PC-3 (cell line): ENCODE measurements at regions of chr12 and their contacts with region 1.

Region 1: DNA sequence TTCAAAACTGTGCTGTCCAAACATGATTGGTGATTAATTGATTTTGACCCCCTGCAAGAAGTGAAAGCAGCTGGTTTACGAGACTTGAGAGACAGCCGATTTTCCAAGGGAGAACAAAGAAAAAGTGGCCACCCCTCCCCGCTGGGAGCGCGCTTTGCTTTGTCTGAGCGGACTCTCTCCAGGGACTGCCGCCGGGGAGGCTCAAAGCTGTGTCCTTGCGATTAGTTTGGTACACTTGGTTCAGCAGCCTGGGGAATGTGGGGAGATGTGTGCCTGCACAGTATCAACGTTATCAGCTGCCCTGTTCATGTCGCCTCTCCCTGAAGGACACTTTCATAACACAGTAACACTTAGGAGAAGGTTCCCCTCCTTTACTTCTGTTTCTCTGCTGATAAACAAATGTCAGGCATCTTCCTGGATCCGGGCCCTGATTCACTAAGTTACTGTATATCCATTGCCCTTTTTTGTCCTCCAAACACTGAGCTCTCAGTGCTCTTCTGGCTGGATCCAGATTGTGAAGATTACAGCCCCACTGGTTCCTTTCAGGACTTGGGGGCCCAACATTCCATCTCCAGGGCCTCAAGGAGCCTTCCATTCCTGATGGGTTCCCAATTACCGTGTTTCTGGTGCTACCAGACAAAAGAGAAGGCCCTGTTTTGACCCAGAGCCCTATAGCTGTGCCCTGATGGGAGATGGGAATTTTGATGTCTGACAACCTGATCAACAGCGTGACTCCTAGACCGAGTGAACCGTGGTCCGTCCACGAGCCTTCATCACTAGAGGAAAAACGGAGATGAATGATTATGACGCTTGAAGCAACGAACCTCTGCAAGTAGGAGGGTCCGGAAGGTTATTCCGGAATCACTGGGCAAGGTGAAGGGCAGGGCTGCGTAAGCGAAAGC is 31.7 kb upstream of the TUBA1C start:
- DNase-seq: no peak
- ATAC-seq: no peak
- H3K4me3 ChIP-seq: no peak overlapping the region
- H3K27ac ChIP-seq: no peak overlapping the region
- H3K4me1 ChIP-seq: peaks cover 4% of the 10 kb centered on the region; the same call in 1 of the 2 replicates
- H3K27me3 ChIP-seq: no peaks in the 10 kb centered on the region
- CTCF ChIP-seq: no peak

Region 2: GRCh38 chr12:49088190-49088931 is 144.8 kb before region 1 on chr12:
- CTCF ChIA-PET with region 1: interaction called, 12 read pairs
- POLR2A ChIA-PET with region 1: no interaction called
- intact Hi-C with region 1: loop called (anchors 1 kb)
- DNase-seq: peak; percentile 95
- ATAC-seq: peak; percentile 80
- H3K4me3 ChIP-seq: peak overlapping the region; percentile 59
- H3K27ac ChIP-seq: no peak overlapping the region
- H3K4me1 ChIP-seq: peaks cover 24% of the 10 kb centered on the region
- H3K27me3 ChIP-seq: peaks cover 26% of the 10 kb centered on the region
- CTCF ChIP-seq: peak; percentile 94

Region 3: DNA sequence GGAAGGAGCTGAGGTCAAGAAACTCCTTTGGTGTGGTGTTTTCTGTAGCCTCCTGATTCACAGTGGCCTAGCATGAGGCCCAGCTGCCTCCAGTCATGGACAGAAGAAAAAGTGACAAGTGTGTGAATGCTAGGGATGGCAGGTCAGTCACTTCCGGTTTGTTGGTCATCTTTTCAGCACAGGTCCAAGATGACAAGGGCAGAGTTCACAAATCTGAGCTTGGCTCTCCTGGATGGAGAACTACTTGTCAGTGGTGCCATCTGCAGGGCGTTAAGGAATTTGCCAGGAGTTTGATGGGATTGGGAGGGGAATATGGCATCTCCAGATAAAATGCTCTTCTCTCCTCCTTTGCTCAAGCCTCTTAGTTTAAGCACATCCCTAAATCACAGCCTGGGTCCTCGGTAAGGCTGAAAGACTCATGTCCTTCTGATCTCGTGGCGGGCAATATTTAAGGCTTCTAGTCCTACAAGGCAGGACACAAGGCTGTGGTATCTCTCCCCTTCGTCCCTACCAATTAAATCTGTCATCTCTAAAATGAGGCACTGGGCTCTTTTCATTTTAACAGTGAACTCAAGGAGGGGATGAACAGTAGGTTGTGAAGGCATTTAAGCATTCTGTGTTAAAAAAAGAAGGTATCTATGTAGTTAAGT is 112.0 kb before region 1 on chr12:
- CTCF ChIA-PET with region 1: no interaction called
- POLR2A ChIA-PET with region 1: interaction called, 13 read pairs
- intact Hi-C with region 1: no loop called
- DNase-seq: peak; percentile 79
- ATAC-seq: peak; percentile 90
- H3K4me3 ChIP-seq: no peak overlapping the region
- H3K27ac ChIP-seq: no peak overlapping the region
- H3K4me1 ChIP-seq: 0 out of 2 replicates have a peak, but pooled peaks cover 2% of the 10 kb centered on the region
- H3K27me3 ChIP-seq: no peaks in the 10 kb centered on the region
- CTCF ChIP-seq: peak; percentile 84

Region 4: DNA sequence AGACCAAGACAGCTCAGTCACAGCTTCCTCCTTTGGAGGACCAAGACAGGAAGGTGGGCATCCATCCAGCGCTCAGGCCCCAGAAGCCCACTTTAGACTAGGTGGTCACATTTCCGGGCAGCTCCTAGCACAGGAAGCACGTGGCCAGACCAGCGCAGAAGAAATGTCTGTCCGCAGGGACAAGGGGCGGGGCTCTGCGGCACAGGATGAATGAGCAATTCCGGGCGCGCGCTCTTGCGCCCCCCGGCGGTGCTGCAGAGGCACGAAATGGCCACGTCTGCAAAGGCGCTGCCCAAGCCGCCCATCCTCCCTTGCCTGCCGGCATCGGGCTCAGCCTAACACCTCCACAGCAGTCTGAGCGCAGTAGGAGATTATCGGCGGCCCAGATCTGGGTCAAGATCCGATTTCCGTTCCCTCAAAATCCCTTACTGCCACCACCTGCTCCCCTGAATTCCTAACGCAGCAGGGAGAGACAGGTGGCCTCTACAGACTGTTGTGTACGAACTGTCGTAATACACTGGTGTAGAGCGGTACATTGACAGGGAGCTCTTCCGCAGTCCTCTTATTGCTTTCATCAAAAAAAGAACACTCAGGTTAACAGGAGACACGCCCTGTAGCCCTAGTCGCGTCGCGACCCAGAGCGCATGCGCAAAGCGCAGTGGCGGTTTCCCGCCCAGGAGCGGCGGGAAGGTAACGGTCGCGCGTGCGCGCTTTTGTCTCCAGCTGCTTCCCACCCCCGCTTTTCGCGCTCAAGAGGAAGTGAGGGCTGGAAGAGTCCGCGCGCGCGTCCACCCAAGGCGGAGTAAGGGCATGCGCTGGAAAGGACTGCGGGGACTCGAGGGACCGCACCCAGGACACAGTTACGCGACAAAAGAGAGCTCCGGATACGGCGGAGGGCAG is 102.8 kb before region 1 on chr12:
- CTCF ChIA-PET with region 1: interaction called, 3 read pairs
- POLR2A ChIA-PET with region 1: no interaction called
- intact Hi-C with region 1: loop called (anchors 2 kb)
- DNase-seq: peak; percentile 94
- ATAC-seq: peak; percentile 60
- H3K4me3 ChIP-seq: peak overlapping the region; percentile 84
- H3K27ac ChIP-seq: peak overlapping the region; percentile 87
- H3K4me1 ChIP-seq: peaks cover 31% of the 10 kb centered on the region
- H3K27me3 ChIP-seq: no peaks in the 10 kb centered on the region
- CTCF ChIP-seq: peak; percentile 86

Region 5: GRCh38 chr12:49188914-49189367 is 44.2 kb before region 1 on chr12 and contains the start of gene TUBA1A:
- CTCF ChIA-PET with region 1: no interaction called
- POLR2A ChIA-PET with region 1: no interaction called
- intact Hi-C with region 1: loop called (anchors 1 kb)
- DNase-seq: peak; percentile 72
- ATAC-seq: peak; percentile 92
- H3K4me3 ChIP-seq: peak within 1 kb of the TSS; percentile 89
- H3K27ac ChIP-seq: peak within 1 kb of the TSS; percentile 14; the same call in 1 of the 2 replicates
- H3K4me1 ChIP-seq: peaks cover 5% of the 10 kb centered on the region; the same call in 1 of the 2 replicates
- H3K27me3 ChIP-seq: no peaks in the 10 kb centered on the region; the same call in 1 of the 2 replicates
- CTCF ChIP-seq: no peak
- total RNA-seq, gene TUBA1A: 46.1 and 46.9 TPM in 2 replicates

Region 6: DNA sequence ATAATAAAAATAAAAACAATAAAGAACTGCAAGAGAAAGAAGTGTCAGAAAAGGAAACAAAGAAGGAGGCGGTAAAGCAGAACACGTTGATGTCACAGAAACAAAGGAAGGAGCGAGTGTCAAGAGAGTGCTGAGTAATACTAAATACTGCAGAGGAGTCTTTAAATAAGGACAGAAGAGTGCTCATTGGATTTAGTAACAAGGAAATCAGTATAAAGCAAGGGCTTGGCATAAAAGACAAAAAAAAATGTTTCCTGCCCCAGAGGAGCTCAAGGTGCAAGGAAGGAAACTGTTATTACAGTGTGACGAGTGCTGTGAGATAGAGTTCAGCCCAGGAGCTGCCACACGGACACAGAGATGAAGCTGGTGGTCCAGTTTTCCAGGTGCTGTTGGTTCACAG is 35.9 kb before region 1 on chr12:
- CTCF ChIA-PET with region 1: interaction called, 12 read pairs
- POLR2A ChIA-PET with region 1: no interaction called
- intact Hi-C with region 1: no loop called
- DNase-seq: no peak
- ATAC-seq: no peak
- H3K4me3 ChIP-seq: no peak overlapping the region
- H3K27ac ChIP-seq: no peak overlapping the region
- H3K4me1 ChIP-seq: peaks cover 26% of the 10 kb centered on the region
- H3K27me3 ChIP-seq: no peaks in the 10 kb centered on the region
- CTCF ChIP-seq: no peak

Region 7: GRCh38 chr12:49264738-49265515 is 31.7 kb after region 1 on chr12 and contains the start of gene TUBA1C:
- CTCF ChIA-PET with region 1: interaction called, 10 read pairs
- POLR2A ChIA-PET with region 1: no interaction called
- intact Hi-C with region 1: no loop called
- DNase-seq: peak; percentile 98
- ATAC-seq: peak; percentile 68
- H3K4me3 ChIP-seq: peak within 1 kb of the TSS; percentile 99
- H3K27ac ChIP-seq: peak within 1 kb of the TSS; percentile 99
- H3K4me1 ChIP-seq: peaks cover 42% of the 10 kb centered on the region
- H3K27me3 ChIP-seq: no peaks in the 10 kb centered on the region
- CTCF ChIP-seq: no peak
- total RNA-seq, gene TUBA1C: 1,285 and 1,376 TPM in 2 replicates